Gastrocnemius medialis (tissue), 4 donors: ENCODE measurements at regions of chr1 and their contacts with region 1.

Region 1: DNA sequence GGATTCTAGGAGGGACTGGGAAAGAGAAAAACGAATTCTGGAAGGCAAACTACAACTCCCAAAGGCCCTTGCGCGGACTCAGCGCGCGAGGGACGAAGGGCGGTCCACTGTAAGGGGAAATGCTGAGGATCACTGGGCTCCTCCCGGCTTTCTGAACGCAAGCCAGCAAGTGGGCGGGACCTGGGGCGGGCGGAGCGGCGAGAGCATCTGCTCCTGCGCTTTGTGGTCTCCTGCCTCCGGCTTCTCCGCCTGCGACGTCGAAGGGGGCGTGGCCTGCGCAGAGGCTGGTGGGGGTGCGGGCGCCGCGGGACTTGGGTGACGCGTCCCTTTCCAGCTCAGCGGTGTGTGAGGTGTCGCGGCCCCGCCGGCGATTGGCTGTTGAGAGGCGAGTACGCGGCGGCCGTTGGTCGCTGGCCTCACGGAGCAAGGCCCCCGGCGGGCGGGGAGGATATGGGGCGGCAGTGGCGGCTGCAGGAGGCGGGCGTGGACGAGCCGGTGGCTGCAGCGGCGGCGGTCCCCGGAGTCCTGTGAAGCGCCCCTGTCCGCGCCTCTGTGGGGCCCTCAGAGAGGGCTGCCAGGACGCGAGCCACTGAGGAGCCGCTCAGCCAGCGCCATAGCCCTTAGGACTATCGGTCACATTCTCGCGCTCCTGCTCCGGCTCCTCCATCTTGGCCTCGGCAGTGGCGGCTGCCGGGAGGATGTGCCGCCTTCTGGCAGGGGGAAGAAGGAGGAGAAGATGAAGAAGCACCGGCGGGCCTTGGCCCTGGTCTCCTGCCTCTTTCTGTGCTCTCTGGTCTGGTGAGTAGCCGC is at the start of gene SUCO:
- DNase-seq: peak; percentile 99 to 100
- ATAC-seq: peak; percentile 90 to 93
- H3K4me3 ChIP-seq: peak within 1 kb of the TSS; percentile 69 to 99 (median 96)
- H3K27ac ChIP-seq: peak within 1 kb of the TSS; percentile 94 to 100 (median 98)
- H3K4me1 ChIP-seq: peaks cover 19 to 28% of the 10 kb centered on the region in 2 donors
- H3K27me3 ChIP-seq: no peaks in the 10 kb centered on the region
- CTCF ChIP-seq: no peak
- POLR2A ChIP-seq: peak; percentile 92 to 93
- total RNA-seq, gene SUCO: 5.8 to 11.3 (median 6.4) TPM

Region 2: GRCh38 chr1:171781176-171781875 is 751.6 kb before region 1 on chr1 and contains the start of gene METTL13:
- in situ Hi-C with region 1: loop called in 2 of 4 experiments (anchors 25 kb)
- intact Hi-C with region 1: loop called (anchors 2 kb)
- DNase-seq: peak; percentile 98
- ATAC-seq: peak; percentile 98 to 99
- H3K4me3 ChIP-seq: peak within 1 kb of the TSS; percentile 75 to 92 (median 87)
- H3K27ac ChIP-seq: peak within 1 kb of the TSS; percentile 88 to 95 (median 90)
- H3K4me1 ChIP-seq: peaks cover 34 to 35% of the 10 kb centered on the region in 2 donors
- H3K27me3 ChIP-seq: no peaks in the 10 kb centered on the region
- CTCF ChIP-seq: peak in 1 of 5 experiments; percentile 18
- POLR2A ChIP-seq: peak; percentile 82 to 90
- total RNA-seq, gene METTL13: 18.6 to 32.8 (median 23.5) TPM